Activated CD4-positive, alpha-beta memory T cell treated with anti-CD3 and anti-CD28 coated beads for 36 hours (primary cell): ENCODE measurements at regions of chrX and their contacts with region 1.

Region 1: GRCh38 chrX:152941328-152942106 is 43.6 kb downstream of the ZNF185 start:
- DNase-seq: peak; percentile 93
- H3K4me3 Mint-ChIP-seq: peak overlapping the region; percentile 80
- H3K27ac Mint-ChIP-seq: peak overlapping the region; percentile 82
- H3K4me1 Mint-ChIP-seq: peaks cover 2% of the 10 kb centered on the region
- H3K27me3 Mint-ChIP-seq: no peaks in the 10 kb centered on the region

Region 2: GRCh38 chrX:152619897-152620296 is 321.6 kb before region 1 on chrX:
- CTCF ChIA-PET with region 1: no interaction called
- POLR2A ChIA-PET with region 1: no interaction called
- intact Hi-C with region 1: no loop called
- DNase-seq: no peak
- H3K4me3 Mint-ChIP-seq: no peak overlapping the region
- H3K27ac Mint-ChIP-seq: no peak overlapping the region
- H3K4me1 Mint-ChIP-seq: no peaks in the 10 kb centered on the region
- H3K27me3 Mint-ChIP-seq: peaks cover 7% of the 10 kb centered on the region

Region 3: DNA sequence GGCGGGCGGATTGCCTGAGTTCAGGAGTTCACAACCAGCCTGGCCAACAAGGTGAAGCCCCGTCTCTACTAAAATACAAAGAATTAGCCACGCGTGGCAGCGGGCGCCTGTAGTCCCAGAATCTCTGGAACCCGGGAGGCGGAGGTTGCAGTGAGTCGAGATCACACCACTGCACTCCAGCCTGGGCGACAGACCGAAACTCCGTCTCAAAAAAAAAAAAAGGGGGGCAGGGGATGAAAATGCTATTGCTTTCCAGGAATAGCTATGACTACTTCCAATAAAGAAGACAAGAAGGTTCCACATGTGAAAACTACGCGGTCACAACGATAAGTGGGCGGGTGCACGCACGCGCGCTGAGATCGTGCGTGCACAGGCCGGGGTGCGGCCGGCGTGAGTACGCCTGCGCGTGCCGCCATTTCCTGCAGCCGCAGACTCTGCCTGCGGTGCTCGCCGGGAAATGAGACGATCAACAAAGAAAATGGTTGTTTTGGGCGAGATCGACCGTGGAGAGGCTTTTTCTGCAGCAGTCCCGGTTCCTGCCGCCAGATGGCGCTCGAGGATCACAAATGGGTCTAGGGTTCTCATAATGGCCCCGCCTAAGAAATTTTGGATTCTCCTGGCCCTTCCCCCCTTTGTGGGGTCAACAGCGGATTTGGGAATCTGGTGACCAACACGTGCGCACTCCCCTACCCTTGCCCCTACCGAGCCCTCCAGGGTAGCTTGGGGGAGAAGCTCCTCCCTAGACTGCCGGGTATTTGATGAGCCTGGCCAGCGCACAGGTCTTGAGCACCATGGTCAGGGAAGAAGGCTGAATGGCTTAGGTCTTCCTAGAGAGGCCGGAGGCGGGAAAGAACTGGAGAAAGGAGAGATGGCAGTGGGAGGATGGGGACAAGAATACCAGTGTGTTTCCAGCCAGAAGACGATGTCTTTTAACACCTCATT is 17.3 kb after region 1 on chrX:
- CTCF ChIA-PET with region 1: interaction called, 14 read pairs
- POLR2A ChIA-PET with region 1: interaction called, 5 read pairs
- intact Hi-C with region 1: loop called (anchors 1 kb)
- DNase-seq: peak; percentile 93
- H3K4me3 Mint-ChIP-seq: peak overlapping the region; percentile 51
- H3K27ac Mint-ChIP-seq: peak overlapping the region; percentile 87
- H3K4me1 Mint-ChIP-seq: peaks cover 6% of the 10 kb centered on the region
- H3K27me3 Mint-ChIP-seq: no peaks in the 10 kb centered on the region

Region 4: DNA sequence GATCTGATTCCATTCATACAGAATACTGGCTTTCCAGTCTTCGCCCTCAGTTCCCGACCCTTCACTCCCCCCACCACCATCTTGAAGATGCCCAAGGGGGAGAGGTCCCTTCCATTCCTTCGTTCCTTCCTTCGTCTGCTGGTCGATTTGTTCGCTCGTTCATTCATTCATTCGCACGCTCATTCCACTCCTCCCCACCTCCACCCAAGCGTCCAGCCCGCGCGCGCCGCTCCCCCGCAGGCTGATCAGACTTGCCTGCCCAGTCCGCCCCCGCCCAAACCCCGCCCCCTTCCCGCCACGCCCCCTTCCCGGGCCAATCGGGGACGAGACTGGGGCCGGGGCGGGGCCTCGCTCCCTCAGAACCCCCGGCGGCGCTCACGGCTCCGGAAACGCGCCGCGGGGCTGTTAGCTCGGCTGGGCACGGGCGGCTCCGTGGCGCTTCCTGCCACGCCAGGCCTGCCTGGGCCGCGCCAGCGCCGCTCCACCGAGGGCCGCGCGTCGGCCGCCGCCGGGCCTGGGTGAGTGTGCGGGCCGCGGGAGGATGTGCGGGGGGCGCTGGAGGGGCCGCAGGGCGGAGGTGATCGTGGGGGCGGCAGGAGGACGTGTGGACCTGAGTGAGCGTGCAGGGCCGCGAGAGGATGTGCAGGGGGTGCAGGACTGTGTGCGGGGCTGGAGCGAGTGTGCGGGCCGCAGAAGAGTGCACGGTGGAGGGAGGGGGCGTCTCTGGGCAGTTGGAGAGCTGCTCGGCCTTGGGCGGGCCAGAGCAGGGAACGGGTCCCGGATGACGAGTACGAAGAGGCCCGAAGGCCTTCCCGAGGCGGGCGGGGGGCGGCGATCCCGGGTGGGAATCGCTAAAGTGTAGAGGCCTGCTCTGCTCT is 392.5 kb after region 1 on chrX and contains the start of gene ZNF275:
- CTCF ChIA-PET with region 1: no interaction called
- POLR2A ChIA-PET with region 1: no interaction called
- intact Hi-C with region 1: loop called (anchors 5 kb)
- DNase-seq: peak; percentile 86
- H3K4me3 Mint-ChIP-seq: peak within 1 kb of the TSS; percentile 83
- H3K27ac Mint-ChIP-seq: peak within 1 kb of the TSS; percentile 65
- H3K4me1 Mint-ChIP-seq: peaks cover 39% of the 10 kb centered on the region
- H3K27me3 Mint-ChIP-seq: no peaks in the 10 kb centered on the region
- total RNA-seq, gene ZNF275: 11.3 to 11.5 TPM

Region 5: GRCh38 chrX:153507484-153508178 is 566.1 kb after region 1 on chrX:
- CTCF ChIA-PET with region 1: interaction called, 21 read pairs
- POLR2A ChIA-PET with region 1: no interaction called
- intact Hi-C with region 1: loop called (anchors 5 kb)
- DNase-seq: peak; percentile 86
- H3K4me3 Mint-ChIP-seq: no peak overlapping the region
- H3K27ac Mint-ChIP-seq: no peak overlapping the region
- H3K4me1 Mint-ChIP-seq: peaks cover 10% of the 10 kb centered on the region
- H3K27me3 Mint-ChIP-seq: no peaks in the 10 kb centered on the region

Region 6: GRCh38 chrX:153662266-153662665 is 720.7 kb after region 1 on chrX:
- CTCF ChIA-PET with region 1: interaction called, 17 read pairs
- POLR2A ChIA-PET with region 1: no interaction called
- intact Hi-C with region 1: loop called (anchors 5 kb)
- DNase-seq: peak; percentile 66
- H3K4me3 Mint-ChIP-seq: peak overlapping the region; percentile 59
- H3K27ac Mint-ChIP-seq: no peak overlapping the region
- H3K4me1 Mint-ChIP-seq: no peaks in the 10 kb centered on the region
- H3K27me3 Mint-ChIP-seq: peaks cover 5% of the 10 kb centered on the region